ENCODE measurements at regions of chr4 and their contacts with region 1.

Region 1: DNA sequence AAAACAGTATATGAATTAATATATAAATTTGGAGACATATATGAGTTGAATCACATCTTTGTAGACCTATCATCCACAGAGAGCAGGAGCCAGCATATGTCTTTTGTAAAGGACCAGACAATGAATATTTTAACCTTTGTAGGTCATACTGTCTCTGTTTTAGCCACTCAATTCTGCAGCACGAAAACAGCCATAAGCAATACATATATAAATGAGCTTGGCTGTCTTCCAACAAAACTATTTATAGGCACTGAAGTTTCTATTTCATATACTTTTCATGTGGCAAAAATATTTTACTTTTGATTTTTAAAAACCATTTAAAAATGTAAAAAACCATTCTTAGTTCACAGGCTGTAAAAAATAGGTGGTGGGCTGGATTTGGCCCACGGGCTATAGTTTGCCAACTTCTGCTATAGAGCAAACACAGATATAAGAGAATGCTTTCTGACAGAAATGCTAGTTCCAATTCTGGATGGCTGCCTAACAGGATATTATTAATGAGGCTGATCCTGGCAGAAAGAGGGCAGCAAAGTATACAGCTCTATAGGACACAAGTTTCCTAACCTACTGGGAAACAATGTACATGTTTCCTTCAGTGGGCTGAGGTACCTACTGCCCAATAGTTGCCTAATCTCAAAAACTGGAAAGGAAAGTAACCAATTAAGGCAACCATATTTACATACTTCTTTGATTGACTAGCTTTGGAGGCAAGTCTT is 58.1 kb upstream of the UCP1 start:
- DNase-seq: no peak
- H3K4me3 ChIP-seq: no peak overlapping the region
- H3K27ac ChIP-seq: no peak overlapping the region
- H3K4me1 ChIP-seq: peaks cover 41% of the 10 kb centered on the region
- CTCF ChIP-seq: peak; percentile 39; the same call in 1 of the 2 replicates

Region 2: DNA sequence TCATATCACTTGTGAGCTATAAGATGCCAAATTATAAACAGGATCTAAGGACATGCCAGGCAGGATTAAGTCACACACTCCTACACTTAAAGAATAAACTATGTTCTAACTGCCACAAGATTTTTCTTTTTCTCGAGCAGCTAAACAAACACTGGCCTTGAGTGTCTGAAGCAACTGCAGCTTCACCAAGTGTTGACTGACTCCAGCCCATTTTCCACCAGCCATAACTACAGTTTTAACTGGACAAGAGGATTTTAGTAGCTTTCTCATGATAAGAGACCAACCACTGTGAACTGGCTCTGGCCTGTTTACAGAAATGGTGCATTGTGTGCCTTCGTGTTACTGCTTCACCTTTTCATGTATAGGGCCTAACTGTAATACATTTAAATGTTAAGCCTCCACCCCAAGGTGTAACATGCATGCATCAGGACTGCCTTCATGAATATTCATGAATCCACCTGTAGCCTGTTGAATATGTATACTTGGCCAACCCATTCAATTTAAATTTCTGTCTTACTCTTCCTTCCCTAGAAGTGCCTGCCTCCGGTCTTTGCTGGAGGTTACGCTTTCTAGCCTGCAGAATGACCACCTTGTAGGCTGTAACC is 68.9 kb before region 1 on chr4:
- CTCF ChIA-PET with region 1: no interaction called
- POLR2A ChIA-PET with region 1: no interaction called
- intact Hi-C with region 1: no loop called
- DNase-seq: no peak
- H3K4me3 ChIP-seq: no peak overlapping the region
- H3K27ac ChIP-seq: no peak overlapping the region
- H3K4me1 ChIP-seq: peaks cover 23% of the 10 kb centered on the region
- CTCF ChIP-seq: no peak

Region 3: GRCh38 chr4:140720387-140721304 is 93.8 kb after region 1 on chr4:
- CTCF ChIA-PET with region 1: no interaction called
- POLR2A ChIA-PET with region 1: interaction called, 13 read pairs
- intact Hi-C with region 1: loop called (anchors 5 kb)
- DNase-seq: peak; percentile 76
- H3K4me3 ChIP-seq: peak overlapping the region; percentile 65
- H3K27ac ChIP-seq: peak overlapping the region; percentile 70
- H3K4me1 ChIP-seq: peaks cover 57% of the 10 kb centered on the region
- CTCF ChIP-seq: no peak

Measured in OCI-LY7 (cell line).